Left colon (tissue), 2 donors: ENCODE measurements at regions of chr15 and their contacts with region 1.

Region 1: GRCh38 chr15:77637851-77638692 is 5.4 kb upstream of the LINGO1 start:
- DNase-seq: no peak
- ATAC-seq: no peak

Region 2: DNA sequence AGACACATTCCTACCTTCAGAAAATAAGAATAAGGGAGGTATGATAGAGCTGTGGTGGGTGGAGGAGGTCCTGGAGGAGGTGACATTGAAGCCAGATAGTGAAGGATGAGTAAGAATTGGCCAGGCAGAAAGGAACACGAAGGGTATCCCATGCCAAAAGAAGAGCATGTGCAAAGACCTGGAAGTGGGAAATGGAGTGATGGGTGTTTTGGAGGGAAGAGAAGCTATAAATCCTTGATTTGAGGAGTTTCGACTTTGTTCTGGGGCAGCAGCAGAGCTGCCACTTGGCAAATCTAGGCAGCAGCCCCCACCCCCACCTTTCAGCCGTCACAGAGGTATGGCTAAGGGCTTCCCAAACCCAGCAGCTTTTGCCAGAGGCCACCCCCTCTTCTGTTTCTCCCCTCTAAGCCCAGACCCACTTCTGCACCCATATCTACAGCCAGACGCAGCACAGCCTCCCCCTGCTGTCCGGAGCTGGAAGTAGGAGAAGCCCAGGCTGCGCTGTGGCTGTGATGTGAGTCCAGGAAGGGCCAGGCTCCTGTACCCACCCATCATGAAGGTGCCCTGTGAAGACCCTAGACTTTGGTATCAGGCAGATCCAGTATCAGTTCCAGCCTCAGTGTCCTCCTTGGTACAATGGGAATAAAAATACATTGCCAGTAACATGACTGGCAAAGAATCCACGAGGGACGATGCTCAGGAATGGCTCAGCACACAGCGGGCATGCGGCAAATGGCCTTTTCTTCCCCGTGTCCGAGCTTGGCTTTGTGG is 183.3 kb after region 1 on chr15:
- intact Hi-C with region 1: loop called in 1 of 2 experiments (anchors 5 kb)
- DNase-seq: peak in 1 of 2 donors; percentile 74
- ATAC-seq: peak; percentile 82